Body of pancreas (tissue), 4 donors: ENCODE measurements at regions of chr13 and their contacts with region 1.

Region 1: GRCh38 chr13:113941571-113942191 is 32.2 kb downstream of the C13orf46 start:
- DNase-seq: peak in 1 of 4 donors; percentile 9
- ATAC-seq: no peak
- H3K4me3 ChIP-seq: no peak overlapping the region
- H3K27ac ChIP-seq: no peak overlapping the region
- H3K4me1 ChIP-seq: peaks cover 16% of the 10 kb centered on the region
- H3K27me3 ChIP-seq: no peaks in the 10 kb centered on the region
- CTCF ChIP-seq: no peak
- POLR2A ChIP-seq: no peak

Region 2: GRCh38 chr13:113814435-113814821 is 127.3 kb before region 1 on chr13:
- intact Hi-C with region 1: loop called (anchors 5 kb)
- DNase-seq: peak in 2 of 4 donors; percentile 28 to 40
- ATAC-seq: peak; percentile 28
- H3K4me3 ChIP-seq: no peak overlapping the region
- H3K27ac ChIP-seq: peak overlapping the region; percentile 44 to 80 (median 64)
- H3K4me1 ChIP-seq: peaks cover 36% of the 10 kb centered on the region
- H3K27me3 ChIP-seq: no peaks in the 10 kb centered on the region
- CTCF ChIP-seq: no peak
- POLR2A ChIP-seq: no peak

Region 3: GRCh38 chr13:114166381-114167131 is 224.9 kb after region 1 on chr13:
- intact Hi-C with region 1: no loop called
- DNase-seq: no peak
- ATAC-seq: no peak
- H3K4me3 ChIP-seq: no peak overlapping the region
- H3K27ac ChIP-seq: no peak overlapping the region
- H3K4me1 ChIP-seq: no peaks in the 10 kb centered on the region
- H3K27me3 ChIP-seq: no peaks in the 10 kb centered on the region
- CTCF ChIP-seq: no peak
- POLR2A ChIP-seq: no peak